ENCODE measurements at regions of chr18 and their contacts with region 1.

Region 1: DNA sequence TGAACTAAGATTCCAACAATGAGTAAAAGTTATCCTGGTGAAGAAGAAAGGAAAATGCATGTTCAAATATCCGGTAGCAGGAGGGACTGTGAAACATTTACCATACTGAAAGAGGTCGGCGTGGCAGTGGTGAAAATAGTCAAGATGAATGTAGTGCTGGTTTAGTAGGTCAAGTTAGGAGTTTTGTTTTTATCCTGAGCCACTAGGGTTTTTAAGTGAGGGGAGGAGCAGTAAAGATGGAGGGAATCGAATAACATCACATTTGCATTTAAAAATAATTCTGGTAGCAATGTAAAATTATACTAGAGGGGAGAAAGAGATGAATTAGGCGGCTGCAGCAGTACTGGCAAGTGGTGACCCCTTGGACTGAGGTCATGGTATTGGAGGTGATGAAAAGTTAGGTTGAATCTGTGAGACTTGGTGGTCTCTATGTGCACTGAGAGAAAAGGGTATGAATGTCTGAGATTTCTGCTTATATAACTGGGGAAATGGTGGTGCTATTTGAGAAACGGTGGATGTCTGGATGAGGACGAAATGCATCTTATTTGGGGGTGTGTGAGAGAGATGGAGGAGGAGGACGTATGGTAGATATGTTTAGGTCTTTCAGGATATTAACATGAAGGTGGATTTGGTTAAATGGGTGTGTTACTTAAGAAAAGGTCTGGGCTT is 5.9 kb downstream of the VAPA start:
- DNase-seq: no peak
- ATAC-seq: no peak
- H3K4me3 ChIP-seq: no peak overlapping the region
- H3K27ac ChIP-seq: no peak overlapping the region
- H3K4me1 ChIP-seq: peaks cover 3 to 93% (median 83%) of the 10 kb centered on the region in 12 donors
- H3K27me3 ChIP-seq: no peaks in the 10 kb centered on the region
- CTCF ChIP-seq: no peak
- POLR2A ChIP-seq: no peak

Region 2: GRCh38 chr18:9814431-9814830 is 105.3 kb before region 1 on chr18:
- intact Hi-C with region 1: loop called in 3 of 10 experiments (anchors 5 to 10 kb)
- DNase-seq: no peak
- ATAC-seq: no peak
- H3K4me3 ChIP-seq: no peak overlapping the region
- H3K27ac ChIP-seq: peak overlapping the region in 3 of 12 donors; percentile 0 to 39 (median 39)
- H3K4me1 ChIP-seq: peaks cover 0 to 45% (median 17%) of the 10 kb centered on the region in 12 donors
- H3K27me3 ChIP-seq: no peaks in the 10 kb centered on the region
- CTCF ChIP-seq: no peak
- POLR2A ChIP-seq: no peak